Left cardiac atrium (tissue), 4 donors: ENCODE measurements at regions of chr11 and their contacts with region 1.

Region 1: GRCh38 chr11:107770551-107770951 is 58.7 kb upstream of the SLN start:
- DNase-seq: no peak
- ATAC-seq: peak in 1 of 2 donors; percentile 17

Region 2: DNA sequence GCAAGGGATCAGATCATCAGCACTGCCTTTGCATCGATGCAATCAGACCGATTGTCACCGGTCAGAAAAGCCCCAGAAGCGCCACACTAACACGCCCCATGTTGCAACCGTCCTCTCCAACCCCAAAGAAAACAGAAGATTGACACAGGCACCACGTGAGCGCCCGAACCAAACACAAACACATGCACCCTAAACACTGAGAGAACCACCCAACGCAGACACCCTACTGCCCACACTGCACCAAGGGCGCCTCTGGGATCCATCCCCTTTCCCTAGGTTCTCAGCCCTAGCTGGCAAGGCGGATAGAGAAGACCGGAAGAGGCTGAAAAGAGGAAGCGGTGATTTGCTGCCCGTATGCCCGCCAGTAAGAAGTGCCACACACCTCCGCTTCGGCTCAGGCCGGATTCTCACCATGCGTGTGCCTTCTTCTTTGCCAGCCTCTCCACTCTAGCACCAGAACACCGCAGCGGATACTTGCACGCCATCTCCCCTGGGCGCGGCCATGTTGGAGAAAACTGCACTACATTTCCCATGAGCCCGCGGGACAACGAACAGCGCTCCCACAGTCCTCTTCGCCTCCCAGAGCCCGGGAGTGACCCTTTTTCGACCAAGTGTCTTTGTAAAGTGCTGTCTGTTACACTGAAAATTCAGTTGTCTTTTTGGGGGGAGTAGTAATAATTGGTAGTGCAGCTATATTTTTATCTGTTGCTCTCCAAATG is 205.2 kb before region 1 on chr11 and contains the start of gene ALKBH8:
- intact Hi-C with region 1: loop called in 1 of 2 experiments (anchors 5 kb)
- DNase-seq: peak; percentile 82
- ATAC-seq: peak; percentile 97 to 98
- total RNA-seq, gene ALKBH8: 6.3 to 6.5 TPM

Region 3: GRCh38 chr11:107577346-107577711 is 193.2 kb before region 1 on chr11:
- intact Hi-C with region 1: loop called in 1 of 2 experiments (anchors 5 kb)
- DNase-seq: no peak
- ATAC-seq: no peak

Region 4: DNA sequence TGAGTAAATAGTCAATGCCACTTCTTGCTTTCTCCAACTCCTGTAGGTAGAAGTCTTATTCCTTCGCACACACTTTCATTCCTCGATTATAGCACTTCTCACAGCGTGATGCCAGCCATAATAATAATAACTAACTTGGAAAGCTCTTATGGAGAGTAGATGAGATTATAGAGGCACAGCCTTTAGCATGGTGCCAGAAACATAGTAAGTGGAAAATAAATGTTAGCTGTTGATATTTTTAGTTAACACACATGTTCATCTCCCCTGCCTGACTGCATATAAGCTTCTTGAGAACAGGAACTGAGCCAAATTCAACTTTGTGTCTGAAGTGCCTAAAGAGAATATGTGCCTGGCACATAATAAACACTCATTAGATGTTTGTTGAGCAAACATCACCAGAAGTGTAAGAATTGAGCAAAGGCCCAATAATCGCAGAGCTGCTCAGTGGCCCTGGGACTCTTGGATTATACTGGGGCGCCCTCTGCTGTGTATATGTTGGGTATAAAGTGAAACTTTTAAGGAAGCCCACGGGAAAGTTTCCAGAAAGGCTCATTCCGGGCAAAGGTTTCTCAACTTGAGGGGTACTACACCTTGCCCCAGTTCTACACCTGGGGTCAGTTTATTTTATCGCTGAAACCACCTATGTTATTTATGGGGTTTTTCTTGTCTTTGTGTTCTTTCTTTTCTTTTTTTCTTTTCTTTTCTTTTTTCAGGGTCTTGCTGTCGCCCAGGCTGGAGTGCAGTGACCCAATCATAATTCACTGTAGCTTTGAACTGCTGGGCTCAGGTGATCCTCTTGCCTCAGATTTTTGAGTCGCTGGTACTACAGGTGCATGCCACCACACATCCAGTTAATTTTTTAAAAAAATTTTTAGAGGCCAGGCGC is 81.0 kb before region 1 on chr11:
- intact Hi-C with region 1: loop called in 1 of 2 experiments (anchors 10 kb)
- DNase-seq: peak; percentile 77
- ATAC-seq: peak; percentile 87 to 88

Region 5: GRCh38 chr11:107705027-107705426 is 65.5 kb before region 1 on chr11:
- intact Hi-C with region 1: loop called in 1 of 2 experiments (anchors 5 kb)
- DNase-seq: no peak
- ATAC-seq: peak in 1 of 2 donors; percentile 85

Region 6: DNA sequence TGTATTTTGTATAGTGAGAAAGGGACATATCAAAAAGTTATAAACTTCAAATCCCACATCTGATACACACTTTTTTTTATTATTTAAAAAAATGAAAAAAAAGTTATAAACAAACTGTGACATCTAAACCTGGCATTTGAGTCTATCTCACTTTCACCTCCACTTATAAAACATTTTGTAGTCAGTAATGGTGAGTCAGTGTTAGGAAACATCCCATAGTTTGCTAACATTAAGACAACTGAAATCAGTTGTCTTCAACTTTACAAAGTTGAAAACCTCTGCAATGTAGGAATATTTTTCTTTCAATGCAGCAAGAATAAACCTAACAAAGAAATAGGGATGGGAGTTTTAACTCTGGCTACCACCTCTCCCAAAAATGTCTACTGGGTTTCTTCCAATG is 40.3 kb after region 1 on chr11:
- intact Hi-C with region 1: no loop called
- DNase-seq: no peak
- ATAC-seq: no peak